Activated naive CD4-positive, alpha-beta T cell treated with anti-CD3 and anti-CD28 coated beads for 36 hours (primary cell): ENCODE measurements at regions of chrX and their contacts with region 1.

Region 1: DNA sequence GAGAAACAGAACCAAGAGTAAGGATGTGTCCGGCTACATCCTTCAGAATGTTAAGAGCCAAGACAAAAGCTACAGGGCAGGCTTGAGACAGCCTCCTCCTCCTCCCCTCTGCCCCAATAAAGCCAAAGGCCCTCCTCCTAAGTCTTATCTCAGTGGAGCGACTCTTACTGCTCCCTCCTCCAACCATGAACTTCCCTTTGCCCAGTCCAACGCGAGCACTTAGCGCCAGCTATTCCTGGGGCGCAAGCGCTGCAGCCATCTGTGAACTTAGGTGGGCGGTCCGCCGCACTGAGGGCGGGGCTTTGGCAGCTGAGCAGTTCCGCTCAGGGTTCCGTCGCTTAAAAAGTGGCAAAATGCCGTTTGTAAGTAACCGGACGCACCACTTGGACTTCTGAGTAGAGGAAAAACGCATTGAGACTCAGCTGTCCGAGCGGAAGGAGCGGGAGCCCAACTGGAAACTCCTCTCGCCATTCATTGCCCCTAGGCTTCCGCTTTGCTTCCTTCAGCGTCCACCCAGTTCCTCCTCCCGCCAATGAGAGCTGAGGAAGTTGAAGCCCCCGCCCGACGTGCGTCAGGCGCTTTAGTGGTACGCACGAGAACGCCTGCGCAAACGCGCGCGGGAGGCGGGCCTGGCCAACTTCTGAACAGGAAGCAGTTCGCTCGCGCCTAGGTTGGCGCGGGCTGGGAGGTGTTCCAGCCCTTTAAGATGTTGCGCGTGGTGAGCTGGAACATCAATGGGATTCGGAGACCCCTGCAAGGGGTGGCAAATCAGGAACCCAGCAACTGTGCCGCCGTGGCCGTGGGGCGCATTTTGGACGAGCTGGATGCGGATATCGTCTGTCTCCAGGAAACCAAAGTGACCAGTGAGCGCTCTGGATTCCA is at the start of gene APEX2:
- DNase-seq: peak; percentile 89
- H3K4me3 Mint-ChIP-seq: peak within 1 kb of the TSS; percentile 80
- H3K27ac Mint-ChIP-seq: peak within 1 kb of the TSS; percentile 90
- H3K4me1 Mint-ChIP-seq: peaks cover 20% of the 10 kb centered on the region
- H3K27me3 Mint-ChIP-seq: no peaks in the 10 kb centered on the region
- total RNA-seq, gene APEX2: 34.7 to 36.3 TPM

Region 2: GRCh38 chrX:54182864-54183608 is 816.9 kb before region 1 on chrX and contains the start of gene FAM120C:
- CTCF ChIA-PET with region 1: no interaction called
- intact Hi-C with region 1: loop called (anchors 5 kb)
- DNase-seq: peak; percentile 66
- H3K4me3 Mint-ChIP-seq: peak within 1 kb of the TSS; percentile 75
- H3K27ac Mint-ChIP-seq: peak within 1 kb of the TSS; percentile 84
- H3K4me1 Mint-ChIP-seq: peaks cover 38% of the 10 kb centered on the region
- H3K27me3 Mint-ChIP-seq: no peaks in the 10 kb centered on the region
- total RNA-seq, gene FAM120C: 4.3 to 5.9 TPM

Region 3: DNA sequence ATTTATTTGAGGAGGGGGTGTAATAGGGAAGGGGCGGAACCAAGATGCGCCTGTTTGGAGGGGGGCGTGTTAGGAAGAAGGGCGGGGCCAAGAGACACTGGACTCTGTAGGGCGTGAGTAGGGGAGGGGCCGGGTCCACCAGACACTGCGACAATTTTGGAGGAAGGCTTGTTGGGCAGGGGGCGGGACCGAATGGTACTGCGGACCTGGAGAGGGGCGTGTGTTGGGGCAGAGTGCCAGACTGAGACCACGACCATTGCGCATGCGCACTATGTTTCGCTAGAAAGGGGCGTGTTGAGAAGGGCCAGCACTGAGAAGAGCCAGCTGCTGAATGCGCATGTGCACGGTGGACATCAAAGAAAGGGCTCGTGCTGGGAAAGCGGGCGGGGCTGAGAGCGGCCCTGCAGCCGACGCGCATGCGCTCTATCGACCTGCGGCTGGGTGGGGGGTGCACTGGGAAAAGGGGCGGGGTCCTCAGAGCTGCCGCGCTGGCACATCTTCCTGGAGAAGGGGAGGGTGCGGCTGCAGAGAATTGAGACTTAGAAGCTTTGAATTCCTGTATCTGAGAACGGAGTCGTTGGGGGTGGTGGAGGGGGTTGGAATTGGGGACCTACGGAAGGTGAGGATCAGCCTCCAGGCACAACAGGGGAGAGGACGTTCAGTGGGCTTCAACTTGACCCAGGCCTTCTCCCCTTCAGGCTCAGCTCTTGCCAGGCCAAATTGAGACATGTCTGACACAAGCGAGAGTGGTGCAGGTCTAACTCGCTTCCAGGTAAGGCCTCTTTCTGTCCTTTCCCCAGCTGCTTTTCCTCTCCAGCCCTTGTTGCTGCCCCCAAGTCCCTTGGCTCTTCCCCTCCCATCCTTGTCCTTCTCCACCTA is 191.1 kb before region 1 on chrX:
- CTCF ChIA-PET with region 1: no interaction called
- intact Hi-C with region 1: loop called (anchors 1 kb)
- DNase-seq: peak; percentile 92
- H3K4me3 Mint-ChIP-seq: peak overlapping the region; percentile 88
- H3K27ac Mint-ChIP-seq: peak overlapping the region; percentile 88
- H3K4me1 Mint-ChIP-seq: peaks cover 15% of the 10 kb centered on the region
- H3K27me3 Mint-ChIP-seq: no peaks in the 10 kb centered on the region

Region 4: GRCh38 chrX:54921427-54922021 is 78.4 kb before region 1 on chrX:
- CTCF ChIA-PET with region 1: no interaction called
- intact Hi-C with region 1: loop called (anchors 1 kb)
- DNase-seq: peak; percentile 70
- H3K4me3 Mint-ChIP-seq: peak overlapping the region; percentile 87
- H3K27ac Mint-ChIP-seq: peak overlapping the region; percentile 73
- H3K4me1 Mint-ChIP-seq: peaks cover 8% of the 10 kb centered on the region
- H3K27me3 Mint-ChIP-seq: no peaks in the 10 kb centered on the region

Region 5: DNA sequence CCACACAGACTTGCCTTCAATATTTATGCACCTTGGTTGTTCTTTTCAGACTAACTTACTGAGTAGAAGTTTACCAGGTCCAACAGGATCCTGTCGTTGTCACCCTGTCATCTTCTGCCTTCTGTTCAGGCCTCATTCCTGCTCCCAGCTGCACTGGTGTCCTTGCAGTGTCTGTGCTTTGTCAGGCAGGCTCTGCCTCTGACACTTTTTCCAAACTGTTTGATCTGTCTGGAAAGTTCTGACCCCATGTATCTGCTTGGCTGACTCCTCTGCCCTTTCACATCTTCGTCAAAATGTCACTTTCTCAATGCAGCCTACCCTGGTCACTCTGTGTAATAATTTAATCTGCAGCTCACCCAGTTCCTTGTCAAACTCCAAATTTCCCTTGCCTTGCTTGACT is 98.7 kb after region 1 on chrX:
- CTCF ChIA-PET with region 1: no interaction called
- intact Hi-C with region 1: no loop called
- DNase-seq: no peak
- H3K4me3 Mint-ChIP-seq: no peak overlapping the region
- H3K27ac Mint-ChIP-seq: no peak overlapping the region
- H3K4me1 Mint-ChIP-seq: no peaks in the 10 kb centered on the region
- H3K27me3 Mint-ChIP-seq: no peaks in the 10 kb centered on the region

Region 6: DNA sequence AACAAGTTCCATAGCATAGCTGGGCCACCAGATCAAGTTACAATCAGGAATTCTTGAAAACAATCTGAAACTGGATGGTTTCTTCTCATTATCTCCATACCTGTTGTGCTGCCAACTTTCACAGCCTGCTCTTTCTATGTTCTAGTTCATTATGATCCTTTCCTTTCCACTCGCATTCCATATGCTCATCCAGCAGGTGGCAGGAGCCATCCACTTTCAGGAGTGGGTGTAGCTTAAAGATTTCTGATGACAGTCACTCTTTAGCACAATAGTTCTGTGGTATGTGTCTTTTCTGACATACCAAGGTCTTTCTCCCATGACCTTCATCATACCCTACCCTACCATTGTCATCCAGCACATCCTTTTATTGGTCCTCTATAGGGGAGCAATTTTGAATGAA is 135.2 kb after region 1 on chrX:
- CTCF ChIA-PET with region 1: no interaction called
- intact Hi-C with region 1: no loop called
- DNase-seq: peak; percentile 56
- H3K4me3 Mint-ChIP-seq: no peak overlapping the region
- H3K27ac Mint-ChIP-seq: no peak overlapping the region
- H3K4me1 Mint-ChIP-seq: no peaks in the 10 kb centered on the region
- H3K27me3 Mint-ChIP-seq: no peaks in the 10 kb centered on the region